Breast epithelium (tissue), 4 donors: ENCODE measurements at regions of chr1 and their contacts with region 1.

Region 1: DNA sequence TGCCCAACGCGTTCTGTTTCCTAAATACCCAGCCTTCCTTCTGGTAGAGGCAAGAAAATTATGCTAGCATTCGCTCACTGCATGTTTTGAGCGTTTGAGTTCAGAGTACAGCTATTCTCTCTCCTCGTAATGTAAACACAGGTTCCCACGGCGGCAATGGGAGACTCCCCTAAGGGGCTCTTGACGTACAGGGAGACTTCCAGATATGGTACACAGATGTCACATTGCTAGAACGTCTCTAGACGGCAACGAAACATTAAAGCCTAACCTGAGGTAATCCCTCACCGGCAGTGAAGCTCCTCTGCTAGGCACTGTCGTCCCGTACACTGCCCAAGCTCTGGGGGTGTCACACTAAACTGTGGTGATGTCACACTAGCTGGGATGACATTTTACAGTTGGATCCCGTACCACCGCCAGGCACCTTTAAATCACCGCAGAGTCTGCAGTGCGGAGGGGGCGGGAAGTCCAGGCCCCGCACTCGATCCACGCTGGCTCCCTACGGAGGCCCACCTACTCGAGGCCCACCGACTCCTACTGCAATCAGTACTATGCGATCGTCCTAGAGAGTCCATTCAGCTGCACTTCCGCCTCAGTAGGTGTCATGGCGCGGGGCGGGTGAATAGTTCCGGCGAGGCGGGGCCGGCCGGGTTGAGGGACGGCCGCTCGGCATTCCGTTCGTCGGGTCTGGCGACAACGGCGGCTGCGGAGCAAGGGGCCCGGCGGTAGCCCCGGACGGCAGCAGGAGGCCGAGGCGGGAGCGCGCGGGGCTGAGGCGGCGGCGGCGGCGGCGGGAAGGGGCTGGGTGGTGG is at the start of gene HIPK1:
- DNase-seq: peak; percentile 87 to 92
- H3K4me3 ChIP-seq: peak within 1 kb of the TSS; percentile 71 to 87 (median 84)
- H3K27ac ChIP-seq: peak within 1 kb of the TSS; percentile 88 to 97
- H3K4me1 ChIP-seq: no peaks in the 10 kb centered on the region
- H3K27me3 ChIP-seq: no peaks in the 10 kb centered on the region
- CTCF ChIP-seq: peak in 2 of 3 donors; percentile 22 to 40
- POLR2A ChIP-seq: peak; percentile 49
- total RNA-seq, gene HIPK1: 46.9 to 66.2 (median 57.8) TPM

Region 2: DNA sequence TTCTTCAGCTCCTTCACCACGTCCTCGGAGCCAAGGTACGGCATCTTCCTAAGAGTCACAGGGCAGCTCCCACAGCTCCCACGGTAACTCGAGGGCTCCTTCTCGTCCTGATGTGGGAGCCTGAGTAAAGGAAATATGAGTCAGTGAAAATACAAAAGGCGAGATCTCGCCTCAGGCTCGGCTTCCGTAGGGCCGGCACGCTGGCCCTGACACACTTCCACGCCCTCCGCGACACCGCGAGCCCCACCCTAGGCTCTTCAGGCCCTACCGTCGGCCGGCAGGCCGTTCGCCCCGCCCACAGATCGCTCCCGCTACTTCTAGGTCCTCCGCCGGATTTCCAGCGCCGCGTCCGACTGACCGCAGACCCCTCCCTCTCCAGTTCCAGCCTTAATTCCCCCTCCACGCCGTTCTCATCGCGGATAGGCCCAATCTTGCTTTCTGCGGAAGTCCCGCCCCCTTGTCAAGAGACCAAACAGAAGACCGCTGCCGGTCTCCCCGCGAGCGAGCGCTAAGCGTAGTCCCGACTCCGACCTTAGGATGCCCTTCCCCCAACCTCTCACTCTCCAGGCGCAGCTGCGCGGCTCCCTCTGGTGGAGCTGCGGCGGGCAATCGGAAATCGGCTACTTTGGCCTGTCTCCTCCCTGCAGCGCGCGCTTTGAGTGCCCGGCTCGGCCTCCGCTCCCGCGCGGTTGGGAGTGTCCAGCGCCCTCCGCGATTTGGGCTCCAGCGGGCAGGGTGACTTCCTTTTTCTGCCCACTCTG is 24.3 kb before region 1 on chr1 and contains the starts of genes AP4B1 and DCLRE1B:
- intact Hi-C with region 1: loop called (anchors 1 kb)
- DNase-seq: peak; percentile 96 to 97
- H3K4me3 ChIP-seq: peak within 1 kb of the TSS; percentile 66 to 91 (median 67)
- H3K27ac ChIP-seq: peak within 1 kb of the TSS; percentile 89 to 92
- H3K4me1 ChIP-seq: peaks cover 0 to 4% of the 10 kb centered on the region in 2 donors
- H3K27me3 ChIP-seq: no peaks in the 10 kb centered on the region
- CTCF ChIP-seq: peak; percentile 60 to 86 (median 78)
- POLR2A ChIP-seq: no peak
- total RNA-seq, gene AP4B1: 10.8 to 18.1 (median 14.9) TPM
- total RNA-seq, gene DCLRE1B: 3.3 to 6.2 (median 3.5) TPM

Region 3: GRCh38 chr1:113912594-113913311 is 16.4 kb before region 1 on chr1:
- intact Hi-C with region 1: loop called (anchors 1 kb)
- DNase-seq: no peak
- H3K4me3 ChIP-seq: no peak overlapping the region
- H3K27ac ChIP-seq: peak overlapping the region; percentile 7 to 28
- H3K4me1 ChIP-seq: no peaks in the 10 kb centered on the region
- H3K27me3 ChIP-seq: no peaks in the 10 kb centered on the region
- CTCF ChIP-seq: no peak
- POLR2A ChIP-seq: no peak

Region 4: GRCh38 chr1:114040326-114041015 is 111.3 kb after region 1 on chr1:
- intact Hi-C with region 1: no loop called
- DNase-seq: no peak
- H3K4me3 ChIP-seq: no peak overlapping the region
- H3K27ac ChIP-seq: no peak overlapping the region
- H3K4me1 ChIP-seq: no peaks in the 10 kb centered on the region
- H3K27me3 ChIP-seq: no peaks in the 10 kb centered on the region
- CTCF ChIP-seq: no peak
- POLR2A ChIP-seq: no peak